Psoas muscle (tissue), 8 donors: ENCODE measurements at regions of chr4 and their contacts with region 1.

Region 1: DNA sequence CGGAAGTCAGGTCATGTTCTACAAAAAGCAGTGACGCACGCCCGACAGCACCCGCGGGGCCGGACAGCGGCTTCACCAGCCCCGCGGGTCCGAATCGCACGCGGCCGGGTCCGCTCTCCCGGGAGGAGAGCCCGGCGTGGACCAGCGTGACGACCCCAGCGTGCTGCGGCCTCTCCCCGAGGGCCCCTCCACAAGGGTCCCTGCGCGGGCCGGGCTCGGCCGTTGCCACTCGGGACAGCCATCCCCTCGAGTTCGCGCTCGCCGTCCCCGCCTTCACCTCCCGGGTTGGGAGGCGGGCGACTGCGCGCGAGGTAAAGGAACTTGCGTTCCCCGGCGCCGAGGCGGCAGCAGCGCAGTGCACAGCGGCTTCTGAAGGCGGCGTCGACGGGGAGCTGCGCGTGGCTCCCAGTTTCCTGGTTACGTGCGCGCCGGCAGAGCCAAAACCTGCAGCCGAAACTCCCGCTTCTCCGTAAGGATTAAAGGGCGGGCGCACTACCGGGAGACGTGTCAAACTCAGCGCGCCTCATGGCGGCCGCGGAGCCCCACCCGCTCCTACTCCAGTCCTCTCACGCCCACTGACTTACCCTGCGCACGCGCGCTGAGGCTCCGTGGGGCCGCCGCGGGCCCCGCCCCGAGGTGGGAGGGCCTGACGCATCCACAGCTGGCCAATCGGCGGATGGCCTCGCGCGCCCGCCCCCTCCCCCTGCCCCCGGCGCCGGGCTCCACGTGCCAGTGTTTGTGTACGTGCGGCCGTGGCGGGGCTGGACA is 416 bp upstream of the LRP2BP start:
- DNase-seq: peak; percentile 97 to 98
- ATAC-seq: peak; percentile 94 to 96 (median 94)
- H3K4me3 ChIP-seq: peak overlapping the region; percentile 84
- H3K27ac ChIP-seq: peak overlapping the region; percentile 100
- H3K4me1 ChIP-seq: peaks cover 15% of the 10 kb centered on the region
- H3K27me3 ChIP-seq: no peaks in the 10 kb centered on the region
- CTCF ChIP-seq: no peak

Region 2: GRCh38 chr4:184649026-184649970 is 746.8 kb before region 1 on chr4 and contains the starts of genes CASP3 and PRIMPOL:
- intact Hi-C with region 1: loop called in 1 of 2 experiments (anchors 10 kb)
- DNase-seq: peak; percentile 98 to 99
- ATAC-seq: peak; percentile 92 to 95 (median 94)
- H3K4me3 ChIP-seq: peak within 1 kb of the TSS; percentile 91
- H3K27ac ChIP-seq: peak within 1 kb of the TSS; percentile 99
- H3K4me1 ChIP-seq: peaks cover 53% of the 10 kb centered on the region
- H3K27me3 ChIP-seq: no peaks in the 10 kb centered on the region
- CTCF ChIP-seq: peak; percentile 29
- total RNA-seq, gene CASP3: 13.8 to 49.7 (median 20.5) TPM
- total RNA-seq, gene PRIMPOL: 4.8 to 10.1 (median 7.5) TPM

Region 3: GRCh38 chr4:185142912-185143595 is 253.1 kb before region 1 on chr4 and contains the start of gene SLC25A4:
- intact Hi-C with region 1: loop called in 1 of 2 experiments (anchors 5 kb)
- DNase-seq: peak; percentile 90 to 95
- ATAC-seq: peak; percentile 84 to 88 (median 86)
- H3K4me3 ChIP-seq: peak within 1 kb of the TSS; percentile 72
- H3K27ac ChIP-seq: peak within 1 kb of the TSS; percentile 91
- H3K4me1 ChIP-seq: peaks cover 57% of the 10 kb centered on the region
- H3K27me3 ChIP-seq: no peaks in the 10 kb centered on the region
- CTCF ChIP-seq: peak; percentile 57
- total RNA-seq, gene SLC25A4: 384 to 1,107 (median 729) TPM

Region 4: DNA sequence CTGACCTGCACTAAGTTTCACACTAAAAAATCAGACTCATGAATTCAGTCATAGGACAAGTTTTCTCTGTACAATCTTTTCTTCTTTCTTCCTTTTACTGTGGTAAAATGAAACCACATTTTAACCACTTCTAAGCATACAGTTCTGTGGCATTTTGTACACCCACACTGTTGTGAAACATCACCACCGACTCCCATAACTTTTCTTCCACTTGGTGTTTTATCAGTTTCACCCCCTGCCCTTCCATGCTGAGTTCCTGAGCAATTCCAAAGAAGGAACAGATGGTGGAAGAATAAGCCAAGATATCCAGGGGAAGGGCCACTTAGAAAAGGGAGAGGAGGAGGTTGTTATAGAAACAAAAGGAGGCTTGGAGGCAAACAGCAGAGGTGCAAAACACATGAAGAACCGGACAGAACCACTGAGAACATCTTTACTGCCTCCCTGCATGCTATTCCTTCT is 230.5 kb before region 1 on chr4:
- intact Hi-C with region 1: no loop called
- DNase-seq: no peak
- ATAC-seq: no peak
- H3K4me3 ChIP-seq: no peak overlapping the region
- H3K27ac ChIP-seq: no peak overlapping the region
- H3K4me1 ChIP-seq: no peaks in the 10 kb centered on the region
- H3K27me3 ChIP-seq: no peaks in the 10 kb centered on the region
- CTCF ChIP-seq: no peak

Region 5: GRCh38 chr4:185203486-185204237 is 192.5 kb before region 1 on chr4 and contains the start of gene CFAP97:
- intact Hi-C with region 1: loop called in 1 of 2 experiments (anchors 10 kb)
- DNase-seq: peak; percentile 94
- ATAC-seq: peak; percentile 88 to 92 (median 90)
- H3K4me3 ChIP-seq: peak within 1 kb of the TSS; percentile 93
- H3K27ac ChIP-seq: peak within 1 kb of the TSS; percentile 99
- H3K4me1 ChIP-seq: peaks cover 14% of the 10 kb centered on the region
- H3K27me3 ChIP-seq: no peaks in the 10 kb centered on the region
- CTCF ChIP-seq: no peak
- total RNA-seq, gene CFAP97: 10.1 to 20.3 (median 11.3) TPM

Region 6: DNA sequence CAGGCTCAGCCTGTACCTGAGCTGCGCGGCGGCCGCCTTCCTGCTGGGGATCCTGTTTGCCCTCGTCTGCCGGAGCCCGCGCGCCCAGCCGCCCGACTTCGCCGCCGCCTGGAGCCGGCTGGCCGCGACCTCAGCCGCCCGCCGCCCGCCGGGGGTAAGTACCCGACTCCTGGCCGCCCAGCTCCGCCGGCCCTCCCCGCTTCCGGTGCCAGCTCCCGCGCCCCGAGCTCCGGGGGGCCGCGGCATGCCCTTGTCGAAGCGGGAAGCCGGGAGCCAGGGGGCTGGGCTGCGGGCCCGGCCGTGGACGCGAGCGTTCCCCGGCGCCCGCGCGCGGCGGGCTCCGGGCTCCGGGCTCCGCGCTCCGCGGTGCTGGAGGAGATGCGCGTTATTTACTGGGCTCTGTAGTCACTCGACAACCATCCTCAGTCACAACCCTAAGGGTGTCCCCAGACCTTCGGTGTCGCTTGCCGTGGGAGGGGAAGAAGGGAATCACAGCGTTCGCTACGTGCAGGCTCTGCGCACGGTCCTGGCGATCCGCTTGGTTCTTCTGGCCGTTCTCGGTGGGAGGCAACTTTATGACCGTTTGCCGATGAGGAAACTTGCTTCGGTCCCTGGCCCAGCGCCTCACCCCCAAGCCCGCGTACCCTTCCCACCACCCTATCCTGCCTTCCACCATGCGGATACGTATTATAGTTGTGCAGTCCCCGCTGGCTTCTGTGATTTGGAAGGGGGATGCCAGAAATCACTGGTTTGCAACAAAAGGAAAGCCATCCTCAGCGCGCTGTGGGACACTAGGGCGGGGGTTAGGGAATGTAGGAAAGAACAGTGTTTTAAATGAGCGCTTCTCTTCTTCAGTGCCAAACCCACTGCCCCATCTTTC is 185.8 kb before region 1 on chr4:
- intact Hi-C with region 1: loop called (anchors 2 to 10 kb)
- DNase-seq: peak; percentile 61 to 72
- ATAC-seq: peak; percentile 47 to 55 (median 52)
- H3K4me3 ChIP-seq: peak overlapping the region; percentile 71
- H3K27ac ChIP-seq: peak overlapping the region; percentile 90
- H3K4me1 ChIP-seq: peaks cover 14% of the 10 kb centered on the region
- H3K27me3 ChIP-seq: no peaks in the 10 kb centered on the region
- CTCF ChIP-seq: no peak

Region 7: GRCh38 chr4:185591679-185592141 is 195.6 kb after region 1 on chr4:
- intact Hi-C with region 1: loop called (anchors 5 to 10 kb)
- DNase-seq: no peak
- ATAC-seq: peak in 3 of 4 donors; percentile 31 to 49 (median 40)
- H3K4me3 ChIP-seq: peak overlapping the region; percentile 16
- H3K27ac ChIP-seq: peak overlapping the region; percentile 75
- H3K4me1 ChIP-seq: peaks cover 28% of the 10 kb centered on the region
- H3K27me3 ChIP-seq: no peaks in the 10 kb centered on the region
- CTCF ChIP-seq: no peak

Region 8: DNA sequence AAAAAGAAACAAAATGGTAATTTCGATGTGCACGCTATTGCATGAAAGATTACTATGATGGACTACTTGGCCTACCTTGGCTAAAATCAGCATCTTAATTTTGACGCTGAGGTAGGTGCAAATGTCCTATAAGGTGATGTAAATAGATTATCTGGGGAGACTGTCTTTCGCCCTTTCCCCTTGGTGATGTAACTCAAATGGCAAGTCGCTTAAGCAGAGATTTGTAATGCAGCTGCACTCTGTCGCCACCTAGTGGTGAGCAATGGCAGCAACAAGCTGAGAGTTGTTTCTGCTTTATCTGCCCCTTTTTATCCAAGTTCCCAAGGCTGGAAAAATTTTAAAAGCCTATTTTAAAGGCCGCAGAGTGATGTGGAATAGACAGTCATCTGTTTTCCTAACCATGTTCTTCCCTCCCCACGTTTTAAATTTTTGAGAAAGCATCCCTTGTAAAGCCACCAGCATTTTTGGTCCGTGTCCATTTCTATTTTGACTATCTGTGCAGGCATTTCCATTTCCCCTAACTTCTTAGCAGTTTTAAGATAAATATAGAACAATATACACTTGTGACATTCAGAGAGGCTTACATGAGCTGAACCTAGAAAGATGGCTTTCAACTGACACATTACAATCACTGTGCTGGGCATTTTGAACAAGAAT is 201.5 kb after region 1 on chr4:
- intact Hi-C with region 1: loop called (anchors 5 to 10 kb)
- DNase-seq: peak; percentile 73 to 85
- ATAC-seq: peak; percentile 73 to 86 (median 78)
- H3K4me3 ChIP-seq: no peak overlapping the region
- H3K27ac ChIP-seq: peak overlapping the region; percentile 42
- H3K4me1 ChIP-seq: peaks cover 8% of the 10 kb centered on the region
- H3K27me3 ChIP-seq: no peaks in the 10 kb centered on the region
- CTCF ChIP-seq: peak; percentile 100